Mammary epithelial cell (primary cell): ENCODE measurements at regions of chr16 and their contacts with region 1.

Region 1: DNA sequence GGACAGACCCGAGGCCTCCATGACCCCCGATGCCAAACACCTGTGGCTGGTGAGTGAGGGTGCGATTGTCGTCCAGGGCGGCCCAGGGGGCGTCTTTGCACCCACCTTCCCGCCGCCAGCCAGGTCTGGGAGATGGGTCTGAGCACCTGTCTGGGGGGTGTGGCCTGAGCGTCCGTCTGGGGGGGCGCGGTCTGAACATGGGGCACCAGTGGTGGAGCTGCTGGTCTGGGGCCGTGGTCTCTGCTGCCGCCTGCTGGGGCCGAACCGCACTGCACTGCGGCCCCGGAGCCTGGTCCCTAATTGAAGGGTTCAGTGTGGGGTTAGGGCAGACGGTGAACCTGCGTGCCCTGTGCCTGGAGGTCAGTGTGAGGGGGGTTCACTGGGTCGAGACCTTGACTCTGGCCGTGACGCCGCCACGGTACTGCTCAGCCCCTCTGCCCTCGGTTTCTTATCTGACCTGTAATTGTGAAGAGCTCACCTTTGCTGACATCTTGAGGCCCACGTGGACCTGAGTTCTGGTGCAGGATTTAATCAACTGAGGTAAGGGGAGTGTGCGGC is 12.6 kb upstream of the TCF25 start:
- DNase-seq: peak; percentile 32
- H3K4me3 ChIP-seq: no peak overlapping the region
- H3K27ac ChIP-seq: no peak overlapping the region
- H3K4me1 ChIP-seq: peaks cover 23% of the 10 kb centered on the region
- H3K27me3 ChIP-seq: no peaks in the 10 kb centered on the region
- CTCF ChIP-seq: peak; percentile 91 to 98

Region 2: GRCh38 chr16:89574681-89575246 is 286.1 kb before region 1 on chr16:
- CTCF ChIA-PET with region 1: no interaction called
- dilution Hi-C with region 1: no loop called
- in situ Hi-C with region 1: no loop called
- intact Hi-C with region 1: loop called (anchors 5 kb)
- DNase-seq: peak; percentile 41
- H3K4me3 ChIP-seq: peak overlapping the region in 2 of 3 experiments; percentile 28 to 29
- H3K27ac ChIP-seq: no peak overlapping the region
- H3K4me1 ChIP-seq: peaks cover 15% of the 10 kb centered on the region
- H3K27me3 ChIP-seq: peaks cover 7% of the 10 kb centered on the region
- CTCF ChIP-seq: peak; percentile 64 to 67

Region 3: GRCh38 chr16:89749647-89750046 is 111.2 kb before region 1 on chr16:
- CTCF ChIA-PET with region 1: no interaction called
- dilution Hi-C with region 1: no loop called
- in situ Hi-C with region 1: no loop called
- intact Hi-C with region 1: loop called (anchors 1 kb)
- DNase-seq: peak; percentile 8
- H3K4me3 ChIP-seq: no peak overlapping the region
- H3K27ac ChIP-seq: no peak overlapping the region
- H3K4me1 ChIP-seq: no peaks in the 10 kb centered on the region
- H3K27me3 ChIP-seq: no peaks in the 10 kb centered on the region
- CTCF ChIP-seq: no peak

Region 4: DNA sequence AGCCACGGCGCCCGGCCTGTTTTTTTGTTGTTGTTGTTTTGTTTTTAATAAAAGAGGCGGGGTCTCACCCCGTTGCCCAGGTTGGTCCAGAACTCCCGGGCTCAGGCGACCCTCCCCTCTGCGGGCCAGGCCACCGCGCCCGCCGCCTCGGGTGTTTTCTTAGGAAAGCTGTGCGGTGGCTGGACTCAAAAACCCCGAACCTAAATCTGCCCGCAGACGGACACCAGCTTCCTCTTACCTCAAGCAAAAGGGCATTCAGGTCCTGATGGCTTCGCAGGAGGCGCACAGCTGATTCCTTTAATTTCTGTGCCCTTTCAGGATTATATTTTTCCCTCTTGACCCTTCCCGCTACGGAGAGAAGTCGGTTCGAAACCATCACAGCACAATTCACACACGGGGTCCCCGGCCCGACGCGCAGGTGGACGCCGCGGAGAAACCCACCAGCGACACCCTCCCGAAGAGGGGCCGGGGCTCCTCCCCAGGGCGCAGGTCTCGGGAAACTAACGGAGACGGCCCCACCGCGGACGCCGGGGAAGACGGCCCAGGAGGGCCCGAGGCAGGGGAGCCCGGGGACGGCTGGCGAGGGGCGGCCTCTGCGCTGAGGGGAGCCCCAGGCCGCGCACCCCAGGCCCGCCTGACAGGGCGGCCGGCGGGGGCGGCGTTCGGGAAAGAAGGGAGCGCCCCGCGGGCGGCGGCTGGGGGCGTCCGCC is 45.0 kb before region 1 on chr16:
- CTCF ChIA-PET with region 1: interaction called, 3 read pairs
- dilution Hi-C with region 1: no loop called
- in situ Hi-C with region 1: no loop called
- intact Hi-C with region 1: loop called (anchors 1 kb)
- DNase-seq: no peak
- H3K4me3 ChIP-seq: peak overlapping the region; percentile 79 to 84 (median 80)
- H3K27ac ChIP-seq: peak overlapping the region; percentile 3
- H3K4me1 ChIP-seq: peaks cover 5% of the 10 kb centered on the region
- H3K27me3 ChIP-seq: no peaks in the 10 kb centered on the region
- CTCF ChIP-seq: no peak

Region 5: GRCh38 chr16:89909777-89910716 is 49.2 kb after region 1 on chr16:
- CTCF ChIA-PET with region 1: interaction called, 27 read pairs
- dilution Hi-C with region 1: no loop called
- in situ Hi-C with region 1: no loop called
- intact Hi-C with region 1: loop called (anchors 1 kb)
- DNase-seq: peak; percentile 56
- H3K4me3 ChIP-seq: no peak overlapping the region
- H3K27ac ChIP-seq: no peak overlapping the region
- H3K4me1 ChIP-seq: peaks cover 6% of the 10 kb centered on the region
- H3K27me3 ChIP-seq: no peaks in the 10 kb centered on the region
- CTCF ChIP-seq: peak; percentile 73 to 92